Right cardiac atrium (tissue), 5 donors: ENCODE measurements at regions of chr19 and their contacts with region 1.

Region 1: GRCh38 chr19:56121180-56122167 is at the start of gene ZNF787:
- DNase-seq: peak; percentile 99 to 100 (median 99)
- ATAC-seq: peak; percentile 96 to 97
- H3K4me3 ChIP-seq: peak within 1 kb of the TSS; percentile 94
- H3K27ac ChIP-seq: peak within 1 kb of the TSS; percentile 91
- H3K4me1 ChIP-seq: peaks cover 20% of the 10 kb centered on the region
- H3K27me3 ChIP-seq: no peaks in the 10 kb centered on the region
- total RNA-seq, gene ZNF787: 22.0 to 29.2 (median 26.2) TPM

Region 2: GRCh38 chr19:56080669-56081401 is 40.6 kb before region 1 on chr19:
- intact Hi-C with region 1: no loop called
- DNase-seq: peak; percentile 84 to 94 (median 91)
- ATAC-seq: peak; percentile 67 to 82
- H3K4me3 ChIP-seq: peak overlapping the region; percentile 5
- H3K27ac ChIP-seq: no peak overlapping the region
- H3K4me1 ChIP-seq: no peaks in the 10 kb centered on the region
- H3K27me3 ChIP-seq: no peaks in the 10 kb centered on the region

Region 3: DNA sequence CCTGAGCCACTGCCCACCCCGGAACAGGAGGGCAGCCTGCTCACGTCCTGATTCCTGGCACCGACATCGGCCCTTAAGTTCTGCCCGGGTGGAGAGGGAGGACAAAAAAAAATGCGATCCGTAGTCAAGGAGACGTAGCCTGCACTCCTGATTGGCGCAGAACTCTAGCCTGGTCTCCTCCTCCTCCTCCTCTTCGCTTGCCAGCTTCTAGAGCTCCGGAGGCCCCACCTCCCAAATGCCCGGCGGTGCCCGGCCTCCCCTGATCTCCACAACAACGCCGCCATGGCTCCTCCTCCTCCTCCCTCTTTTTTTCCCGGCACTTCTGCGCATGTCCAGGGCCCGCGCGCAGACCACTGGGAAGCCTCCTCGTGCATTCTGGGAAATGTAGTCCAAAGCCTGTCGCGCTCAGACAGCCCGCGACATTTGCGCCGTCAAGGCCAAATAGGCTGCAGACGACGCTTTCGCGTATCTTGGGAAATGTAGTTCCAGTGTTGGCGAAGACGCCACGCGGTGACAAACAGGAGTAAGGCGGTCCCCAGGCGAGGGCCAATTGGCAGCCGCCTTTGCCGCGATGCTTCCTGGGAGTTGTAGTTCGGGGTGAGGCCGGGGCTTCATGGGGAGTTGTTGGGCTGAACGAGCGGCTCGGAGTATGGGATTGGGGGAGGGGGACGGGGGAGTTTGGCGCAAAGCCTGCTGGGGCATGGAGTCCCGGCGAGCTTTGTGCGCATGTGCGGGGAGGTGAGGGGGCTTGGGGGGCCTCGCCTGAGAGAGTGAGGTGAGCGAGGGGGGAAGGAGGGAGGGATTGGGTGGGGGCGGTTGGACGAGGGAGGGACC is 19.3 kb after region 1 on chr19 and contains the start of gene ZNF444:
- intact Hi-C with region 1: loop called in 1 of 4 experiments (anchors 2 kb)
- DNase-seq: peak; percentile 98 to 99 (median 99)
- ATAC-seq: peak; percentile 95
- H3K4me3 ChIP-seq: peak within 1 kb of the TSS; percentile 56
- H3K27ac ChIP-seq: peak within 1 kb of the TSS; percentile 59
- H3K4me1 ChIP-seq: peaks cover 3% of the 10 kb centered on the region
- H3K27me3 ChIP-seq: no peaks in the 10 kb centered on the region
- total RNA-seq, gene ZNF444: 19.3 to 29.3 (median 23.1) TPM